ENCODE measurements at regions of chr3 and their contacts with region 1.

Region 1: DNA sequence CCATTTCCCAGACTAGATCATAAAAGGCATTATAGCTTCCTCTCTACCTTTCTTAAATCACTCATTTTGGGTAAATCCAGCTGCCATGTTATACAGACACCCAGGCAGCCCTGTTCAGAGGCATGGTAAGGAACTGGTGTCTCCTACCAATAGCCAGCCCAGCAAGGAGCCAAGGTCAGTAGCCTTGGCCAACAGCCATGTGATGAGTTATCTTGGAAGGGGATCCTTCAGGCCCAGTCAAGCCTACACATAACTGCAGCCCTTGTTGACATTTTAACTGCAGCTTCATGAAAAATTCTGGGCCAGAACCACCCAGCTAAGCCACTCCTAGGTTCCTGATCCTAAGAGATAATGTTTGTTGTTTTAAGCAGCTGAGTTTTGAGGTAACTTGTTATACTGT is 29.0 kb upstream of the ZMAT3 start:
- DNase-seq: no peak
- H3K4me3 ChIP-seq: no peak overlapping the region
- H3K27ac ChIP-seq: no peak overlapping the region
- H3K4me1 ChIP-seq: no peaks in the 10 kb centered on the region
- H3K27me3 ChIP-seq: no peaks in the 10 kb centered on the region
- CTCF ChIP-seq: no peak
- EP300 ChIP-seq: no peak
- POLR2A ChIP-seq: no peak

Region 2: DNA sequence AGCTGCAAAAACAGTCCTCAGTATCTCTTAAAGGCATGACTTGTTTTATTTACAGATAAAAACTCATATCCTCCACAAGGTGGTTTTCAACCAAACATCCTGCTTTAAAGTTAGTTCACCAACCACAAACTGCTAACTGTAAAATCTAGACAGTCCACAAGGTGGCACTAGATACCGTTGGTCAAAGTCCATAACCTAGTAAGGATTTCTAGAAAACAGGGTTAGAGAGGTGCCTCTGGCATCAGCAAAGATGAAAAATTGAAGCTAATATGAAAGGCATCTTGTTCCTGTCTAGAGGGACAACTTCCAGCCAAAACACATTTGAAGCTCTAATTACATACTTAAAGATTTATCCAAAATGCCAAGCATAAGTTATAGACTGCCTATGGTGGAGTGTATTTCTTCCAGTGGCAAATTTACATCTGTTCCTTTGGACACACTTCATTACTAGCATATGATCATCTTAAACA is 85.1 kb before region 1 on chr3:
- in situ Hi-C with region 1: loop called in 1 of 4 experiments (anchors 25 kb)
- intact Hi-C with region 1: no loop called
- DNase-seq: peak; percentile 41
- H3K4me3 ChIP-seq: no peak overlapping the region
- H3K27ac ChIP-seq: no peak overlapping the region
- H3K4me1 ChIP-seq: peaks cover 0 to 10% (median 0%) of the 10 kb centered on the region in 4 donors
- H3K27me3 ChIP-seq: no peaks in the 10 kb centered on the region
- CTCF ChIP-seq: peak; percentile 76 to 92 (median 86)
- EP300 ChIP-seq: no peak
- POLR2A ChIP-seq: no peak

Region 3: DNA sequence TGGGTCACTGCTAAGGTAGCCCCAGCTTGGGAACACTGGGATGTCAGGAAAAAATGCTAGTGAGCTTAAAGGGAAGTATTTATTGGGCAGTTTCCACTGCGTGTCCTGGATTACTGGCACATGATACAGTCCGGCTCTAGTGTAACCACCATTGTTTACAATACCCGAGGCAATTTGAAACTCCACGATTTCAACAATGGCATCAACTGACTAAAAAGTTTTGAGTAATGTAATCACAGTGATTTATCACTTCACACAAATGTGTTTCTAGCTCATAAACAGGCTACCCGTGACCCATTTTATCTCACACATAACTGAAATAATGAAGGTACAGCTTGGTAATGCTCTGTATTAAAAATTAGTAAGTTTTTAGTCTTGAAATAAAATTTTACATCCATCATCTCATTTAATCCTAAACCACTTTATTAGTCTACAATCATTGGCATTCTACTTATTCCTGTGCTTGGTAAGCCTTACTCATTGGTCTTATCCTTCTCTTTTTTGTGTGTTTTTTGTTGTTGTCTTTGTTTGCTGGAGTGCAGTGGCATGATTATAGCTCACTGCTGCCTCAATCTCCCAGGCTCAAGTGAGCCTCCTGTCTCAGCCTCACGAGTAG is 36.6 kb before region 1 on chr3:
- in situ Hi-C with region 1: no loop called
- intact Hi-C with region 1: no loop called
- DNase-seq: no peak
- H3K4me3 ChIP-seq: no peak overlapping the region
- H3K27ac ChIP-seq: no peak overlapping the region
- H3K4me1 ChIP-seq: peaks cover 0 to 3% (median 0%) of the 10 kb centered on the region in 4 donors
- H3K27me3 ChIP-seq: no peaks in the 10 kb centered on the region
- CTCF ChIP-seq: no peak
- EP300 ChIP-seq: no peak
- POLR2A ChIP-seq: no peak

Region 4: DNA sequence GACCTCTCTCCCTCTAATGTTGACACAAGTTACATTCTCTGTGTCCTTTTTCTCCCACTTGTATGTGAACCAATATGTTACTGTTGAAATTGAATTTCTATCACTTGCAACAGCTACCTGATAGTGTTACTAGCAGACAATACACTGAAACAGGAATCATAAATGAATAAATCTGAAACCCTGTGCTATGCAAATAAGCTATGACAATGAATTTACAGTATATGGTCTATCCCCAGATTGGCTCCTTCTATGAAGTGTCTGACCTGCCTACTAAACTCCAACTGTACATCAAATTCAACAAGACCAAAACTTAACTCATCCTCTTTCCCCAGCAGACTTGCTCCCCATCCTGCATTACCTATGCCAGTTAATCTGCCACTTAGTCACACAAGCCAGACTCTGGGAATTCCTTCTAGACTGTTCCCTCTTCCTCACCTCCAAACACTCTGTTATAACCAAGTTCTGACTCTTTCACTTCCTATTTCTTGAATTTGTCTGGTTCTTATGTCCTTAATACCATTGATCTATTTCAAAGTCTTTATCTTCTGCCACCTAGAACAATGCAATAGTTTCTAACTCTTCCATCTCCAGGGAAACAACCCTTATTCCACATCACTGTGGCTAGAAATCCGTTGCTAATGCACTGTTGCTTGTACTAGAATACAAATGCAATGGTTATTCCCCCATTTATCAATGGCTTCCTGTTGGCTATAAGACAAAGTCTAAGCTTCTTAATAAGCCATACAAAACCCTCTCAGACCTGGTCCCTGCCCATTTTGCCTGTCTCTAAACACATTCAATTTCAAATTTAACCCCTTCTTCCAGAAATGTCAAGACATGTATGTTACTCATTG is 208.8 kb after region 1 on chr3:
- in situ Hi-C with region 1: loop called in 3 of 4 experiments (anchors 10 to 25 kb)
- intact Hi-C with region 1: loop called (anchors 10 kb)
- DNase-seq: no peak
- H3K4me3 ChIP-seq: no peak overlapping the region
- H3K27ac ChIP-seq: no peak overlapping the region
- H3K4me1 ChIP-seq: no peaks in the 10 kb centered on the region
- H3K27me3 ChIP-seq: no peaks in the 10 kb centered on the region
- CTCF ChIP-seq: no peak
- EP300 ChIP-seq: no peak
- POLR2A ChIP-seq: no peak

Region 5: GRCh38 chr3:179322286-179323196 is 221.9 kb after region 1 on chr3 and contains the start of gene ZNF639:
- in situ Hi-C with region 1: loop called in 3 of 4 experiments (anchors 10 to 25 kb)
- intact Hi-C with region 1: loop called (anchors 10 kb)
- DNase-seq: peak; percentile 83
- H3K4me3 ChIP-seq: peak within 1 kb of the TSS; percentile 77 to 90 (median 90)
- H3K27ac ChIP-seq: peak within 1 kb of the TSS; percentile 92 to 98 (median 97)
- H3K4me1 ChIP-seq: peaks cover 13 to 33% (median 22%) of the 10 kb centered on the region in 4 donors
- H3K27me3 ChIP-seq: no peaks in the 10 kb centered on the region
- CTCF ChIP-seq: peak; percentile 58 to 90 (median 78)
- EP300 ChIP-seq: no peak
- POLR2A ChIP-seq: no peak
- total RNA-seq, gene ZNF639: 9.0 to 42.1 (median 21.9) TPM